Activated CD8-positive, alpha-beta memory T cell treated with anti-CD3 and anti-CD28 coated beads, Interleukin-2, amount 10 ng/mL, durations not matched to agents 7 days and 5 days (primary cell): ENCODE measurements at regions of chr19 and their contacts with region 1.

Region 1: DNA sequence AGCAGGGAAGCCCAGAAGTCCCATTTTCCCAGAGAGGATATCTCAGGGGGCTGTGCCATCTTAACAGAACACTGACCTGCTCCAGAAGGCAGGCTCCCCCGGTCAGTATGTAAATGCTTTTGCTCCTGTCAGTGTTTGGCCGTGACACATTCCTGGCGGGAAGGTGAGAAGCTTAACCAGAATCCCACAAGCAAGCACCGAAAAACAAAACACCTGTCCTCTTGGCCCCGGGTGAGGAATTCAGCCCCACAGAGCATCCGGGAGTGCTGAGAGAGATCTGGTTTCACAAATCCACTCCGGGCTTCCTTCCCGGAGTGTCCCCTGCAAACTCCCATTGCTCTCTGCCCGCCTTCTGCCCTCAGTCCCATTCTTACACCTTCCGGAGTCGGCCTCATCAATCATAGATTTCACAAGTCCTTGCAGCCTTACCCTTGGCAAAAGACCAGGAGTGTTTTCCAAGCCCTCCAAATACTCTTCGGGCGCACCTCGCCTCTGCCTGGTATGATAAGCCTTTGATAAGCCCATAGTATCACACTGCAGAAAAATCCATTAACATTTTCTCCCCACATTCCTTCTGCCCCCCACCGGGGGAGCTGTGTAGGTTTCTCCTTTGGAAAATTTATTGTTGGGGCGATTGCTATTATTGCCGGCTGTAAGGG is 12.2 kb downstream of the TPM4 start:
- DNase-seq: no peak
- ATAC-seq: no peak
- H3K4me3 Mint-ChIP-seq: no peak overlapping the region
- H3K27ac Mint-ChIP-seq: peak overlapping the region; percentile 56
- H3K4me1 Mint-ChIP-seq: peaks cover 64% of the 10 kb centered on the region
- H3K27me3 Mint-ChIP-seq: no peaks in the 10 kb centered on the region

Region 2: GRCh38 chr19:16076154-16076957 is 12.1 kb before region 1 on chr19 and contains the start of gene TPM4:
- CTCF ChIA-PET with region 1: interaction called, 10 read pairs
- DNase-seq: peak; percentile 96
- ATAC-seq: peak; percentile 65
- H3K4me3 Mint-ChIP-seq: peak within 1 kb of the TSS; percentile 80
- H3K27ac Mint-ChIP-seq: peak within 1 kb of the TSS; percentile 98
- H3K4me1 Mint-ChIP-seq: peaks cover 69% of the 10 kb centered on the region
- H3K27me3 Mint-ChIP-seq: no peaks in the 10 kb centered on the region
- total RNA-seq, gene TPM4: 491 to 493 TPM